A673 (cell line): ENCODE measurements at regions of chr11 and their contacts with region 1.

Region 1: GRCh38 chr11:73478738-73479347 is 102.6 kb downstream of the RELT start:
- DNase-seq: peak; percentile 67
- H3K4me3 ChIP-seq: no peak overlapping the region
- H3K27ac ChIP-seq: no peak overlapping the region
- H3K4me1 ChIP-seq: peaks cover 26% of the 10 kb centered on the region
- H3K27me3 ChIP-seq: no peaks in the 10 kb centered on the region
- CTCF ChIP-seq: peak; percentile 99

Region 2: GRCh38 chr11:73538381-73538872 is 59.6 kb after region 1 on chr11:
- CTCF ChIA-PET with region 1: no interaction called
- POLR2A ChIA-PET with region 1: no interaction called
- intact Hi-C with region 1: loop called (anchors 10 kb)
- DNase-seq: peak; percentile 94
- H3K4me3 ChIP-seq: peak overlapping the region; percentile 5
- H3K27ac ChIP-seq: peak overlapping the region; percentile 80
- H3K4me1 ChIP-seq: peaks cover 44% of the 10 kb centered on the region
- H3K27me3 ChIP-seq: no peaks in the 10 kb centered on the region
- CTCF ChIP-seq: no peak

Region 3: GRCh38 chr11:73597956-73598718 is 119.3 kb after region 1 on chr11 and contains the start of gene FAM168A:
- CTCF ChIA-PET with region 1: interaction called, 6 read pairs
- POLR2A ChIA-PET with region 1: no interaction called
- intact Hi-C with region 1: loop called (anchors 5 kb)
- DNase-seq: peak; percentile 100
- H3K4me3 ChIP-seq: peak within 1 kb of the TSS; percentile 95
- H3K27ac ChIP-seq: peak within 1 kb of the TSS; percentile 87
- H3K4me1 ChIP-seq: peaks cover 30% of the 10 kb centered on the region
- H3K27me3 ChIP-seq: no peaks in the 10 kb centered on the region
- CTCF ChIP-seq: peak; percentile 40; the same call in 1 of the 2 replicates
- total RNA-seq, gene FAM168A: 46.1 and 53.1 TPM in 2 replicates

Region 4: GRCh38 chr11:73625696-73626318 is 147.0 kb after region 1 on chr11:
- CTCF ChIA-PET with region 1: interaction called, 11 read pairs
- POLR2A ChIA-PET with region 1: no interaction called
- intact Hi-C with region 1: loop called (anchors 10 kb)
- DNase-seq: peak; percentile 87
- H3K4me3 ChIP-seq: peak overlapping the region; percentile 20
- H3K27ac ChIP-seq: no peak overlapping the region
- H3K4me1 ChIP-seq: no peaks in the 10 kb centered on the region
- H3K27me3 ChIP-seq: no peaks in the 10 kb centered on the region
- CTCF ChIP-seq: peak; percentile 94

Region 5: DNA sequence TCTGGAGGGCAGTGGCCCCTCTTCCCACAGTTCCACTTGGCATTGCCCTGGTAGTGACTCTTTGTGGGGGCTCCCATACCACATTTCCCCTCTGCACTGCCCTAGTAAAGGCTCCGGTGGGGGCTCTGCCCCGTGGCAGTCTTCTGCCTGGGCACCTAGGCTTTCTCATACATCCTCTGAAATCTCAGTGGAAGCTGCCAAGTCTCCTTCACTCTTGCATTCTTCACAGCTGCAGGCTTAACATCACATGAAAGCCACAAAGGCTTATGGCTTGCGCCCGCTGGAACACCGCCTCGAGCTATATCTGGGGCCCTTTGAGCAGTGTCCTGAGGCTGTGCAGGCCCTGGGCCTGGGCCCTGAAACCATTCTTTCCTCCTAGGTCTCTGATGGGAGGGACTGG is 192.9 kb after region 1 on chr11:
- CTCF ChIA-PET with region 1: no interaction called
- POLR2A ChIA-PET with region 1: no interaction called
- intact Hi-C with region 1: no loop called
- DNase-seq: no peak
- H3K4me3 ChIP-seq: no peak overlapping the region
- H3K27ac ChIP-seq: no peak overlapping the region
- H3K4me1 ChIP-seq: no peaks in the 10 kb centered on the region
- H3K27me3 ChIP-seq: no peaks in the 10 kb centered on the region
- CTCF ChIP-seq: no peak